Dendritic cell treated with granulocyte-macrophage colony-stimulating factor and Interleukin-4, amounts not matched to agents 40 ng/mL and 50 ng/mL, for 4 days (primary cell): ENCODE measurements at regions of chr13 and their contacts with region 1.

Region 1: GRCh38 chr13:36275190-36276002 is 22.2 kb downstream of the CCDC169 start:
- H3K4me3 Mint-ChIP-seq: no peak overlapping the region
- H3K27ac Mint-ChIP-seq: no peak overlapping the region
- H3K4me1 Mint-ChIP-seq: no peaks in the 10 kb centered on the region
- H3K27me3 Mint-ChIP-seq: no peaks in the 10 kb centered on the region

Region 2: GRCh38 chr13:35978603-35979316 is 296.6 kb before region 1 on chr13:
- intact Hi-C with region 1: loop called (anchors 1 kb)
- H3K4me3 Mint-ChIP-seq: no peak overlapping the region
- H3K27ac Mint-ChIP-seq: no peak overlapping the region
- H3K4me1 Mint-ChIP-seq: no peaks in the 10 kb centered on the region
- H3K27me3 Mint-ChIP-seq: no peaks in the 10 kb centered on the region